ENCODE measurements at regions of chr7 and their contacts with region 1.

Region 1: DNA sequence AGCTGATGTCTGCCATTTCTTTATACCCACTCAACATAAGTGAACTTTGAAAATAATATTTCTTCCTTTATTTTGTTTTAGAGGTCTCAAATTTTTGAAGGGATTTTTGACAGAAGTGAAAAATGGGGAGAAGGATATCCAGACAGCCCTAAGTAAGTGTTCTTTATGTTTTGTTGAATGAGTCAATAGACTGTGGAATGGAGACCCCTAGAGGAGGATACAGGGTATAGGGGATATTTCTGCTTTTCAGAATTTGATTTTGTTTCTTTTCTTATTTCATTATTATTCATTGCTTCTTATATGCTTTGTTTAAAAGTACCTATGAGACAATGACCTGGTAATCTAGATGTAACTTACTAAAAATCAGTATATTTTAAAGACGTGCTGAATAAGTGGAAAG is 34.4 kb downstream of the PLEKHA8 start:
- DNase-seq: no peak
- ATAC-seq: peak; percentile 91
- H3K4me3 ChIP-seq: no peak overlapping the region
- H3K27ac ChIP-seq: no peak overlapping the region
- H3K4me1 ChIP-seq: no peaks in the 10 kb centered on the region
- H3K27me3 ChIP-seq: no peaks in the 10 kb centered on the region
- CTCF ChIP-seq: peak; percentile 57 to 69 (median 62); a peak in 5 of 6 replicates
- EP300 ChIP-seq: no peak
- POLR2A ChIP-seq: no peak
- RAD21 ChIP-seq: peak; percentile 80

Region 2: DNA sequence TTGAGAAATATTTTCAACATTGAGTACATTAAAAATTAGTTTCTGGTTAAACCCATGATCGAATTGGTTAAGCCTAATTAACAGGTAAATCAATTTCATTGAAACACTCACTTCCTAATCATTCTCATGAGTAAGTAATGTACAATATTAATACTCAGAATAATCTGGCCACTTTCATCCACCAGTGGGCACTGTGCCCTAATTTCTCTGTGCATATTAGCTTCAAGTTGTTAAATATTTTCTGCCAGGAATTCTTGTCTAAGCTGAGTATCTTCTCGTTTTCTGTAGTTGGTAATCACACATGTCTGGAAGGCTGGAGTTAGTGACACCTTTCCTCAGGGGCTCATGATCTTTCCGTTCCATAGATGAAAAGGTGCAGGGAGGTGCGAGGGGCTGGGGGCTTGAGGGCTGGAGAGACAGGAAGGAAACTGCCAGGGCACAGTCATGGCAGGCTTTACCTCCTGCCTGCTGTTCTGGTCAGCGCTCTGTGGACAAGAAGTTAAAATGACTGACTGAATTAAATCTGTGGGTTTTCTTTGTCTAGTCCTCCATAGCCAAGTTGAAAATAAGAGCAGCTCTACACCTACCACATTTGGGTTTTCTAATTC is 184.4 kb before region 1 on chr7:
- CTCF ChIA-PET with region 1: interaction called, 62 read pairs
- POLR2A ChIA-PET with region 1: no interaction called
- RAD21 ChIA-PET with region 1: interaction called, 31 read pairs
- SMC1A ChIA-PET with region 1: interaction called, 28 read pairs
- in situ Hi-C with region 1: loop called (anchors 5 kb)
- intact Hi-C with region 1: loop called (anchors 1 kb)
- DNase-seq: no peak
- ATAC-seq: peak; percentile 77
- H3K4me3 ChIP-seq: no peak overlapping the region
- H3K27ac ChIP-seq: no peak overlapping the region
- H3K4me1 ChIP-seq: no peaks in the 10 kb centered on the region
- H3K27me3 ChIP-seq: no peaks in the 10 kb centered on the region; a peak in 2 of 4 replicates
- CTCF ChIP-seq: peak; percentile 53 to 65 (median 59)
- EP300 ChIP-seq: no peak
- POLR2A ChIP-seq: no peak
- RAD21 ChIP-seq: peak; percentile 66

Region 3: GRCh38 chr7:29921404-29922010 is 141.1 kb before region 1 on chr7:
- CTCF ChIA-PET with region 1: interaction called, 68 read pairs
- POLR2A ChIA-PET with region 1: no interaction called
- RAD21 ChIA-PET with region 1: interaction called, 11 read pairs
- SMC1A ChIA-PET with region 1: interaction called, 40 read pairs
- in situ Hi-C with region 1: no loop called
- intact Hi-C with region 1: no loop called
- DNase-seq: peak; percentile 11
- ATAC-seq: peak; percentile 99
- H3K4me3 ChIP-seq: no peak overlapping the region
- H3K27ac ChIP-seq: no peak overlapping the region
- H3K4me1 ChIP-seq: no peaks in the 10 kb centered on the region
- H3K27me3 ChIP-seq: no peaks in the 10 kb centered on the region
- CTCF ChIP-seq: peak; percentile 83 to 98 (median 89)
- EP300 ChIP-seq: no peak
- POLR2A ChIP-seq: no peak
- RAD21 ChIP-seq: peak; percentile 83

Region 4: DNA sequence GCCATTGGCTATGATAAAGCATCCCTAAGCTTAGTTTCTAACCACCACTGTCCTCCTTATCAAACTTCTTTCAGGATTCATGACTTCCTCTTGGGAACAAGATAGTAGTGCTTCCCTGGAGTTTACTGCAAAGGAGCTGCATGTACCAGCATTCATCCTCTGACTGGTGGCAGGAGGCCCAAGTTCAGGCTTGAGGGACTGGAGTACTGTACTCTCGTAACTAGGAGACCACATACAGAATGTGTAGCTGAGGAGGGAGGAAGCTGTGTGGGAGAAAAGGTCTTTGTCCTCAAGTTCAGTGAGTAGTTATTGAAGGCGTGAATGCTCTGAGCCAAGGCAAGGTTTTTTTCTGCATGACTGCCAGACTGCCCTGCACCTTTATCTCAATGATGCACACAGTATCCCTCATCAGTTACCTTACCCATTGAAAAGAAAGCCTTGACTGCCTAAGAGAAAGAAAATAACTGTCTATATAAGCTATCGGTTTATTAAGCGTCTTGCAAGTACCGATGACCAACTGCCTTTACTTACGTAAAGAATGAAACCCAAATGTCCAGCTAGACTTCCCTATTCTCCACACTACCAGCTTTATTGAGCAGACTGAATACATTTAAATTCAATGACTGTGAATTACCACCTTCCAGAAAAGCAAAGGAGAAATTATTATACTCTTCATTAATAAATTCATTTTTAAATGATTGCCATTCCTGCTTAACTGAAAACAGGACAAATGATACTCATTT is 85.7 kb before region 1 on chr7:
- CTCF ChIA-PET with region 1: interaction called, 18 read pairs
- POLR2A ChIA-PET with region 1: no interaction called
- RAD21 ChIA-PET with region 1: interaction called, 4 read pairs
- SMC1A ChIA-PET with region 1: interaction called, 11 read pairs
- in situ Hi-C with region 1: no loop called
- intact Hi-C with region 1: no loop called
- DNase-seq: no peak
- ATAC-seq: no peak
- H3K4me3 ChIP-seq: no peak overlapping the region
- H3K27ac ChIP-seq: no peak overlapping the region
- H3K4me1 ChIP-seq: peaks cover 3% of the 10 kb centered on the region; the same call in 1 of the 2 replicates
- H3K27me3 ChIP-seq: no peaks in the 10 kb centered on the region
- CTCF ChIP-seq: no peak
- EP300 ChIP-seq: no peak
- POLR2A ChIP-seq: no peak
- RAD21 ChIP-seq: no peak

Region 5: DNA sequence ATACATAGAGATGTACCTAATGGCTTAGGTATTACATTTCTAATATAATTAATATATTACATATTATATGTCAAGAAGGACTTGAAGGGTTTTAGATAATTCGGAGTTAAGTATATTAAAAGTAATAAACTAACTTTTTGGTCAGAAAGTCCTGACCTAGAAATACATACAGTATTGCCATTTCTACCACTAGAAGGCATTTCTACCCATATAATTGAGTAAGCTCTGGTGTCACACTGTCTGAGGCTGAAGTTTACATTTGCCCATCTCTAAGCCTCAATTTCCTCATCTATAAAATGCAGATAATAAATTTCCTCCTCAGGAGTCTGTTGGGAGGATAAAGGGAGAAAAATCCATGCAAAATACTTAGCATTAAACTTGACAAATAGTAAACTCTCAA is 43.2 kb before region 1 on chr7:
- CTCF ChIA-PET with region 1: interaction called, 23 read pairs
- POLR2A ChIA-PET with region 1: no interaction called
- RAD21 ChIA-PET with region 1: interaction called, 6 read pairs
- SMC1A ChIA-PET with region 1: interaction called, 14 read pairs
- in situ Hi-C with region 1: no loop called
- intact Hi-C with region 1: loop called (anchors 2 kb)
- DNase-seq: no peak
- ATAC-seq: peak; percentile 69
- H3K4me3 ChIP-seq: no peak overlapping the region
- H3K27ac ChIP-seq: no peak overlapping the region
- H3K4me1 ChIP-seq: peaks cover 11% of the 10 kb centered on the region
- H3K27me3 ChIP-seq: no peaks in the 10 kb centered on the region
- CTCF ChIP-seq: peak in 2 of 3 experiments; percentile 6 to 35; a peak in 2 of 6 replicates
- EP300 ChIP-seq: no peak
- POLR2A ChIP-seq: no peak
- RAD21 ChIP-seq: peak; percentile 32; the same call in 1 of the 2 replicates

Region 6: DNA sequence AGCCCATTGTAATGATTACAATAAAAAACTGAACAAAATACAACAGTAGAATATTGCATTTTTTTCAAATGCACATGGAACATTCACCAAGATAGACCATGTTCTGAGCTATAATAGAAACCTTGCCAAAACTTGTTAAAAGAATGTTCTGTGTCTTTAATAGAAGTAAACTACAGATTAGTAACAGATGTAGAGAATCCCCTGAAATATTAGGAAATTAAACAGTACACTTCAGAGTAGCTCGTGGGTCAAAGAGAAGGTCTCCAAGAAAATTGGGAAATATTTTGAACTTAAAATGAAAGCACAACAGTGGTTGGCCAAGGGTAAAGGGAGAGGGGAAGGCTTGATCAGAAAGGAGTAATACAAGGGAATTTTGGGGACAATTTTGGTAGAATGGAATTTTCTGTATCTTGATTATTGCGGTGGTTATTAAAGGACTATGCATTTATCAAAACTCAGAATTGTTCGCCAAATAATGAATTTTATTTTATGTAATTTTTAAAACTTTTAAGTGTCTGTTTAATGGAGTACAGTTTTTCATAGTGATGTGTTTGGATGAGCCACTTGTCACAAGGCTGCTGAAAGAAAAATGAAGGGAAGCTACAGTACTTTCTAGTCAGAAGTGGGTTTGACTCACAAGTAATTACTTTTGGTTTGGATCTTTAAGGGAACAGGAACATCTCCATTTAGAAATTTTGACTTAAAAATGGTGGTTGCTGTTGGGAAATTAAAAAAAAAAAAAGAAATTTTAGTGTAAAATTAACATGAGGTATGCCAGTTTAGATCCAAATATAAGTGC is 24.2 kb before region 1 on chr7:
- CTCF ChIA-PET with region 1: interaction called, 16 read pairs
- POLR2A ChIA-PET with region 1: no interaction called
- RAD21 ChIA-PET with region 1: interaction called, 3 read pairs
- SMC1A ChIA-PET with region 1: interaction called, 8 read pairs
- in situ Hi-C with region 1: no loop called
- intact Hi-C with region 1: no loop called
- DNase-seq: no peak
- ATAC-seq: no peak
- H3K4me3 ChIP-seq: no peak overlapping the region
- H3K27ac ChIP-seq: no peak overlapping the region
- H3K4me1 ChIP-seq: no peaks in the 10 kb centered on the region
- H3K27me3 ChIP-seq: no peaks in the 10 kb centered on the region
- CTCF ChIP-seq: no peak
- EP300 ChIP-seq: no peak
- POLR2A ChIP-seq: no peak
- RAD21 ChIP-seq: no peak

Region 7: GRCh38 chr7:30564243-30564892 is 501.8 kb after region 1 on chr7:
- CTCF ChIA-PET with region 1: interaction called, 6 read pairs
- POLR2A ChIA-PET with region 1: no interaction called
- RAD21 ChIA-PET with region 1: no interaction called
- SMC1A ChIA-PET with region 1: interaction called, 3 read pairs
- in situ Hi-C with region 1: no loop called
- intact Hi-C with region 1: loop called (anchors 10 kb)
- DNase-seq: peak; percentile 30
- ATAC-seq: peak; percentile 100
- H3K4me3 ChIP-seq: no peak overlapping the region
- H3K27ac ChIP-seq: no peak overlapping the region
- H3K4me1 ChIP-seq: no peaks in the 10 kb centered on the region
- H3K27me3 ChIP-seq: no peaks in the 10 kb centered on the region
- CTCF ChIP-seq: peak; percentile 77 to 92 (median 79)
- EP300 ChIP-seq: no peak
- POLR2A ChIP-seq: no peak
- RAD21 ChIP-seq: peak; percentile 92